ENCODE measurements at regions of chr6 and their contacts with region 1.

Region 1: GRCh38 chr6:38290133-38290799 is 349.5 kb downstream of the BTBD9 start:
- DNase-seq: no peak
- ATAC-seq: peak; percentile 75 to 88 (median 80)
- H3K4me3 ChIP-seq: no peak overlapping the region
- H3K27ac ChIP-seq: peak overlapping the region in 7 of 12 donors; percentile 6 to 43 (median 25)
- H3K4me1 ChIP-seq: peaks cover 0 to 16% (median 1%) of the 10 kb centered on the region in 12 donors
- H3K27me3 ChIP-seq: no peaks in the 10 kb centered on the region
- CTCF ChIP-seq: no peak
- POLR2A ChIP-seq: no peak

Region 2: GRCh38 chr6:38391195-38391594 is 100.9 kb after region 1 on chr6:
- intact Hi-C with region 1: loop called in 1 of 10 experiments (anchors 10 kb)
- DNase-seq: no peak
- ATAC-seq: peak in 2 of 4 donors; percentile 61 to 63
- H3K4me3 ChIP-seq: no peak overlapping the region
- H3K27ac ChIP-seq: no peak overlapping the region
- H3K4me1 ChIP-seq: peaks cover 0 to 17% (median 2%) of the 10 kb centered on the region in 12 donors
- H3K27me3 ChIP-seq: no peaks in the 10 kb centered on the region
- CTCF ChIP-seq: no peak
- POLR2A ChIP-seq: no peak

Region 3: GRCh38 chr6:38413102-38413800 is 123.0 kb after region 1 on chr6:
- intact Hi-C with region 1: no loop called
- DNase-seq: peak in 2 of 5 donors; percentile 29 to 33
- ATAC-seq: peak in 3 of 4 donors; percentile 44 to 85 (median 59)
- H3K4me3 ChIP-seq: no peak overlapping the region
- H3K27ac ChIP-seq: no peak overlapping the region
- H3K4me1 ChIP-seq: no peaks in the 10 kb centered on the region
- H3K27me3 ChIP-seq: no peaks in the 10 kb centered on the region
- CTCF ChIP-seq: no peak
- POLR2A ChIP-seq: no peak

Region 4: GRCh38 chr6:38612143-38612965 is 322.1 kb after region 1 on chr6:
- intact Hi-C with region 1: no loop called
- DNase-seq: no peak
- ATAC-seq: no peak
- H3K4me3 ChIP-seq: no peak overlapping the region
- H3K27ac ChIP-seq: peak overlapping the region in 1 of 12 donors; percentile 12
- H3K4me1 ChIP-seq: peaks cover 0 to 31% (median 3%) of the 10 kb centered on the region in 12 donors
- H3K27me3 ChIP-seq: no peaks in the 10 kb centered on the region
- CTCF ChIP-seq: no peak
- POLR2A ChIP-seq: no peak

Region 5: GRCh38 chr6:39051399-39052122 is 761.3 kb after region 1 on chr6:
- intact Hi-C with region 1: no loop called
- DNase-seq: no peak
- ATAC-seq: no peak
- H3K4me3 ChIP-seq: no peak overlapping the region
- H3K27ac ChIP-seq: no peak overlapping the region
- H3K4me1 ChIP-seq: peaks cover 0 to 14% (median 0%) of the 10 kb centered on the region in 12 donors
- H3K27me3 ChIP-seq: peaks cover under 1 to 60% (median 25%) of the 10 kb centered on the region in 9 donors
- CTCF ChIP-seq: no peak
- POLR2A ChIP-seq: no peak

Measured in heart left ventricle (tissue), 16 donors.